GM12878 (cell line): ENCODE measurements at regions of chr2 and their contacts with region 1.

Region 1: DNA sequence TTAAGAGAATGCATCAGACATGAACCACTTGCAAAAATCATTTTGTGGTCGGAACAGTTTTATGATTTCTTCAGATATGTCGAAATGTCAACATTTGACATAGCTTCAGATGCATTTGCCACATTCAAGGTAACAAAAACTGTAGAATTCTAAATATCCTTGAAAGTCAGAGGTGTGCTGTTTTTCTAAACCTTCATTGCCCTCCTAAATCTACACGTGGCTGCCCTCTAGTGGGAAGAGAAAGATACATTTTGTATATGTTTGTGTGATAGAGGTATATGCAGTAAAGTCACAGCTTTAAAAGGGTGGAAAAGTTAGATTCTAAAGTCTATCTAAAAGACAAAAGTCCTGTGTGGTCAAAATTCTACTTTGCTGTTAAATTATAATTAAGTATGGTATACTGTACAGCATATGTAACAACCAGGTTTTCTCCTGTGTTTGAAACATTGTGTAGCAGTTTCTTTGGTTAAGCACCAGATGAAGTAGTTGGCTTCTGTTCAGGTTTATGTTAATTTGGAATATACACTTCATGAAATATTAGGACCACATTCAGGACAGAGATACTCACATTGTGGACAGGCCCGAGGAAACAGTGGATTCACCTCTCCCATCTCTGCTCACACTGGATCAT is 65.9 kb upstream of the ITM2C start:
- DNase-seq: no peak
- ATAC-seq: peak; percentile 94
- H3K4me3 ChIP-seq: no peak overlapping the region
- H3K27ac ChIP-seq: no peak overlapping the region
- H3K4me1 ChIP-seq: peaks cover 14% of the 10 kb centered on the region
- H3K27me3 ChIP-seq: no peaks in the 10 kb centered on the region
- CTCF ChIP-seq: peak; percentile 57 to 71 (median 68)
- EP300 ChIP-seq: no peak
- POLR2A ChIP-seq: no peak
- RAD21 ChIP-seq: peak; percentile 96

Region 2: DNA sequence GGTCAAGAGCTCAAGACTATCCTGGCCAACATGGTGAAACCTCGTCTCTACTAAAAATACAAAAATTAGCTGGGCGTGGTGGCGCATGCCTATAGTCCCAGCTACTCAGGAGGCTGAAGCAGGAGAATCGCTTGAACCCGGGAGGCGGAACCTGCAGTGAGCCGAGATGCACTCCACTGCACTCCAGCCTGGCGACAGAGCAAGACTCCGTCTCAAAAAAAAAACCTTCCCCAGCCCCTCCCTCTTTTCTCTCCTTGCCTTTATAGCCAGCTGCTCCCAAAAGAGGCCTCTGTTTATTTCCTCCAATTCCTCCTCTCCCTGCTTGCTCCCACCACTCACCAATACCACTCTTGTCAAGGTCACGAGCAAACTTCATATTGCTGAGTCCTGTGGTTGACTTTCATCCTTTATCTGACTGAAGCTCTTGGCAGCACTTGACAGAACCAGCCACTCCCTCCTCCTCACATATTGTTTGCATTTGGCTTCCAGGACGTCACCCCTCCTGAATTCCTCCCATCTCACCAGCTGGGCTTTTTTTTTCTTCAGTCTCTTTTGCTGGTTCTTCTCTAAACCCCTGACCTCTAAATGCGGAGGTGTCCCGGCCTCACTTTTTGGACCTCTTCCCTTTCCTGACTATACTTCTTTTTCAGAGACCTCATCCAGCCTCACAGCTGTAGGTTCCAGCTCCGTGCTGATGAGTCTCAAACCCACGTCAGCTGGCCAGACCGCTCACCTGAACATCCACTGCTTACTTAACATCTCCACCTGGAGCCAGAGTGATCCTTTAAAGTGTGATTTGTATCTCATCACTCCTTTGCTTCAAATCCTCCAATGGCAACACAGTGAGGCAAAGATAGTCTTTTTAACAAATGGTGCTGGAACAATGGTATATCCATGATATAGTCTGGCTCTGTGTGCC is 170.8 kb before region 1 on chr2:
- CTCF ChIA-PET with region 1: no interaction called
- POLR2A ChIA-PET with region 1: no interaction called
- RAD21 ChIA-PET with region 1: no interaction called
- SMC1A ChIA-PET with region 1: interaction called, 4 read pairs
- in situ Hi-C with region 1: no loop called
- intact Hi-C with region 1: loop called (anchors 5 kb)
- DNase-seq: no peak
- ATAC-seq: no peak
- H3K4me3 ChIP-seq: no peak overlapping the region
- H3K27ac ChIP-seq: no peak overlapping the region
- H3K4me1 ChIP-seq: no peaks in the 10 kb centered on the region
- H3K27me3 ChIP-seq: no peaks in the 10 kb centered on the region
- CTCF ChIP-seq: no peak
- EP300 ChIP-seq: no peak
- POLR2A ChIP-seq: no peak
- RAD21 ChIP-seq: no peak

Region 3: GRCh38 chr2:230658877-230659652 is 139.8 kb before region 1 on chr2:
- CTCF ChIA-PET with region 1: interaction called, 39 read pairs
- POLR2A ChIA-PET with region 1: no interaction called
- RAD21 ChIA-PET with region 1: interaction called, 35 read pairs
- SMC1A ChIA-PET with region 1: interaction called, 24 read pairs
- in situ Hi-C with region 1: no loop called
- intact Hi-C with region 1: no loop called
- DNase-seq: peak; percentile 91
- ATAC-seq: peak; percentile 61
- H3K4me3 ChIP-seq: peak overlapping the region; percentile 62
- H3K27ac ChIP-seq: peak overlapping the region; percentile 91
- H3K4me1 ChIP-seq: peaks cover 67% of the 10 kb centered on the region
- H3K27me3 ChIP-seq: no peaks in the 10 kb centered on the region
- CTCF ChIP-seq: no peak
- EP300 ChIP-seq: peak; percentile 62 to 76
- POLR2A ChIP-seq: no peak; the same call in 1 of the 2 replicates
- RAD21 ChIP-seq: peak; percentile 31; the same call in 1 of the 2 replicates

Region 4: GRCh38 chr2:230712443-230713330 is 86.2 kb before region 1 on chr2 and contains the start of gene CAB39:
- CTCF ChIA-PET with region 1: interaction called, 29 read pairs
- POLR2A ChIA-PET with region 1: interaction called, 3 read pairs
- RAD21 ChIA-PET with region 1: interaction called, 13 read pairs
- SMC1A ChIA-PET with region 1: interaction called, 37 read pairs
- in situ Hi-C with region 1: no loop called
- intact Hi-C with region 1: loop called (anchors 2 kb)
- DNase-seq: peak; percentile 63
- ATAC-seq: peak; percentile 87
- H3K4me3 ChIP-seq: peak within 1 kb of the TSS; percentile 100
- H3K27ac ChIP-seq: peak within 1 kb of the TSS; percentile 85
- H3K4me1 ChIP-seq: peaks cover 6% of the 10 kb centered on the region
- H3K27me3 ChIP-seq: no peaks in the 10 kb centered on the region
- CTCF ChIP-seq: peak; percentile 74 to 94 (median 76); a peak in 4 of 6 replicates
- EP300 ChIP-seq: peak; percentile 27 to 29; a peak in 1 of 4 replicates
- POLR2A ChIP-seq: peak; percentile 80
- RAD21 ChIP-seq: peak; percentile 56
- polyA plus RNA-seq, gene CAB39: 37.2 to 42.8 TPM

Region 5: GRCh38 chr2:230762317-230762896 is 36.5 kb before region 1 on chr2:
- CTCF ChIA-PET with region 1: interaction called, 24 read pairs
- POLR2A ChIA-PET with region 1: no interaction called
- RAD21 ChIA-PET with region 1: interaction called, 16 read pairs
- SMC1A ChIA-PET with region 1: interaction called, 9 read pairs
- in situ Hi-C with region 1: no loop called
- intact Hi-C with region 1: no loop called
- DNase-seq: no peak
- ATAC-seq: peak; percentile 97
- H3K4me3 ChIP-seq: no peak overlapping the region
- H3K27ac ChIP-seq: no peak overlapping the region
- H3K4me1 ChIP-seq: peaks cover 14% of the 10 kb centered on the region
- H3K27me3 ChIP-seq: no peaks in the 10 kb centered on the region
- CTCF ChIP-seq: peak; percentile 55 to 75 (median 61)
- EP300 ChIP-seq: no peak
- POLR2A ChIP-seq: no peak
- RAD21 ChIP-seq: peak; percentile 50

Region 6: DNA sequence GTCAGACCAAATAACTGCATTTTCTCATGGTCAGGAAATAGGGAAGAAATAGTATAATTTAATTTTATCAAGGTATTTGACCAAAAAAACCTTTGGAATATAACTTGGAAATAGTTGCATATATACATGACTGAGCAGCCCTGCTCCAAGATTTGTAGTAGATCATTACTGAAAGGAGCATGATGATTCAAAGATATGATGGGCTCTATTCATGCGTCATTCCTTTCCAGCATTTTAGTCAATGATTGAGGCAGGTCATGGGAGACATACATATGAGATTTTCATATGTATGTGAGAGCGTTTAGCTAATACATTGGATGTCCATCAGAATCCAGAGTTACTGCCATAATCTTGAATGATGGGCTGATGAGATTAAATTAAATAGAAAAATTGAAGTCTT is 11.8 kb before region 1 on chr2:
- CTCF ChIA-PET with region 1: interaction called, 21 read pairs
- POLR2A ChIA-PET with region 1: interaction called, 3 read pairs
- RAD21 ChIA-PET with region 1: interaction called, 14 read pairs
- SMC1A ChIA-PET with region 1: interaction called, 9 read pairs
- in situ Hi-C with region 1: no loop called
- intact Hi-C with region 1: no loop called
- DNase-seq: no peak
- ATAC-seq: no peak
- H3K4me3 ChIP-seq: no peak overlapping the region
- H3K27ac ChIP-seq: no peak overlapping the region
- H3K4me1 ChIP-seq: no peaks in the 10 kb centered on the region
- H3K27me3 ChIP-seq: no peaks in the 10 kb centered on the region
- CTCF ChIP-seq: no peak
- EP300 ChIP-seq: no peak
- POLR2A ChIP-seq: no peak
- RAD21 ChIP-seq: no peak

Region 7: DNA sequence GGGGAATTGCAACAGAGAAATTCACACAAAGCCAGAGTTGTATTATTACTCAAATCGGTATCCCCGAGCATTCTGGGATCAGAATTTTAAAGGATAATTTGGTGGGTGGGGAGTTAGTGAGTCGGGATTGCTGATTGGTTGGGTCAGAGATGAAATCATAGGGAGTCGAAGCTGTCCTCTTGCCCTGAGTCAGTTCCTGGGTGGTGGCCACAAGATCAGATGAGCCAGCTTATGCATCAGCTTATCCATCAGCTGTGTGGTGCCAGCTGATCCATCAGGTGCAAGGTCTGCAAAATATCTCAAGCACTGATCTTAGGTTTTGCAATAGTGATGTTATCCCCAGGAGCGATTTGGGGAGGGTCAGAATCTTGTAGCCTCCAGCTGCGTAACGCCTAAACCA is 31.5 kb after region 1 on chr2:
- CTCF ChIA-PET with region 1: no interaction called
- POLR2A ChIA-PET with region 1: no interaction called
- RAD21 ChIA-PET with region 1: no interaction called
- SMC1A ChIA-PET with region 1: no interaction called
- in situ Hi-C with region 1: no loop called
- intact Hi-C with region 1: no loop called
- DNase-seq: no peak
- ATAC-seq: no peak
- H3K4me3 ChIP-seq: no peak overlapping the region
- H3K27ac ChIP-seq: no peak overlapping the region
- H3K4me1 ChIP-seq: peaks cover 5% of the 10 kb centered on the region; the same call in 1 of the 2 replicates
- H3K27me3 ChIP-seq: no peaks in the 10 kb centered on the region; a peak in 1 of 4 replicates
- CTCF ChIP-seq: no peak
- EP300 ChIP-seq: no peak
- POLR2A ChIP-seq: no peak
- RAD21 ChIP-seq: no peak

Region 8: GRCh38 chr2:231308631-231309428 is 509.9 kb after region 1 on chr2:
- CTCF ChIA-PET with region 1: no interaction called
- POLR2A ChIA-PET with region 1: no interaction called
- RAD21 ChIA-PET with region 1: no interaction called
- SMC1A ChIA-PET with region 1: no interaction called
- in situ Hi-C with region 1: no loop called
- intact Hi-C with region 1: no loop called
- DNase-seq: no peak
- ATAC-seq: no peak
- H3K4me3 ChIP-seq: no peak overlapping the region
- H3K27ac ChIP-seq: no peak overlapping the region
- H3K4me1 ChIP-seq: peaks cover 7% of the 10 kb centered on the region
- H3K27me3 ChIP-seq: no peaks in the 10 kb centered on the region
- CTCF ChIP-seq: no peak
- EP300 ChIP-seq: no peak
- POLR2A ChIP-seq: no peak
- RAD21 ChIP-seq: no peak